Activated naive CD4-positive, alpha-beta T cell treated with anti-CD3 and anti-CD28 coated beads for 36 hours (primary cell): ENCODE measurements at regions of chr13 and their contacts with region 1.

Region 1: GRCh38 chr13:113951246-113951999 is 22.5 kb downstream of the C13orf46 start:
- DNase-seq: peak; percentile 80
- H3K4me3 Mint-ChIP-seq: peak overlapping the region; percentile 32
- H3K27ac Mint-ChIP-seq: no peak overlapping the region
- H3K4me1 Mint-ChIP-seq: peaks cover 2% of the 10 kb centered on the region
- H3K27me3 Mint-ChIP-seq: no peaks in the 10 kb centered on the region

Region 2: DNA sequence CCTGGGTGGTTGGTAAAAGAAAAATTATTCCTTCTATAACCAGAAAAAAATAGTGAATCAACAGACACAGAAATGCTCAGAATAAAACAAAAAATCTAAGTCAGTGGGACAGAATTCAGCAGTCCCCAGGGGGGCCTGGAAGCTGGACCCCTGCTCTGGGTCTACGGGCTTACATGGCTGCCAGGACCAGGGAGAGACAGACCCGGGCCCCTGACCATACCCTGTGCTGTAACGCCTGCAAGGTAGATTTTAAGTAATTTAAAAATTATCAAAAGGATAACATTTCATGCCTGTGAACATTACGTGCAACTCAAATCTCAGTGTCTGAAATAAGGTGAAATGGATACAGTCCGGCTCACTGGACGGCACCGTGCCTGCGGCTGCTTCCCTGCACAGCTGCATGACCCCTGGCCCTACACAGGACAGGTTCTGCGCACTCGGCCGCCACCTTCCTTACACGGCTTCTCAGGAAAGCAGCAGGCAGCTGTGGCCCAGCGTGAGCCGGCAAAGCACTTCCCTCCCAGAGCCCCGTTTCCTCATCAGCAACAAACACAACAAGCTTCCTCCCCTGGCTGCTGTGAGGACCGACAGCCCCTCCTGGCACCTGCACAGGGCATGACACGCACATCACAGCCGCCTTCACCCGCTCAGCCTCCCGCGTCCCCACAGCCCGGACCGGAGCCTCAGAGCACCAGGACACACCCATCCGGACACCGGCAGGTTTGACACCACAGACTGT is 158.8 kb after region 1 on chr13:
- CTCF ChIA-PET with region 1: no interaction called
- intact Hi-C with region 1: loop called (anchors 1 kb)
- DNase-seq: peak; percentile 88
- H3K4me3 Mint-ChIP-seq: peak overlapping the region; percentile 82
- H3K27ac Mint-ChIP-seq: peak overlapping the region; percentile 90
- H3K4me1 Mint-ChIP-seq: peaks cover 83% of the 10 kb centered on the region
- H3K27me3 Mint-ChIP-seq: no peaks in the 10 kb centered on the region